ENCODE measurements at regions of chr12 and their contacts with region 1.

Region 1: DNA sequence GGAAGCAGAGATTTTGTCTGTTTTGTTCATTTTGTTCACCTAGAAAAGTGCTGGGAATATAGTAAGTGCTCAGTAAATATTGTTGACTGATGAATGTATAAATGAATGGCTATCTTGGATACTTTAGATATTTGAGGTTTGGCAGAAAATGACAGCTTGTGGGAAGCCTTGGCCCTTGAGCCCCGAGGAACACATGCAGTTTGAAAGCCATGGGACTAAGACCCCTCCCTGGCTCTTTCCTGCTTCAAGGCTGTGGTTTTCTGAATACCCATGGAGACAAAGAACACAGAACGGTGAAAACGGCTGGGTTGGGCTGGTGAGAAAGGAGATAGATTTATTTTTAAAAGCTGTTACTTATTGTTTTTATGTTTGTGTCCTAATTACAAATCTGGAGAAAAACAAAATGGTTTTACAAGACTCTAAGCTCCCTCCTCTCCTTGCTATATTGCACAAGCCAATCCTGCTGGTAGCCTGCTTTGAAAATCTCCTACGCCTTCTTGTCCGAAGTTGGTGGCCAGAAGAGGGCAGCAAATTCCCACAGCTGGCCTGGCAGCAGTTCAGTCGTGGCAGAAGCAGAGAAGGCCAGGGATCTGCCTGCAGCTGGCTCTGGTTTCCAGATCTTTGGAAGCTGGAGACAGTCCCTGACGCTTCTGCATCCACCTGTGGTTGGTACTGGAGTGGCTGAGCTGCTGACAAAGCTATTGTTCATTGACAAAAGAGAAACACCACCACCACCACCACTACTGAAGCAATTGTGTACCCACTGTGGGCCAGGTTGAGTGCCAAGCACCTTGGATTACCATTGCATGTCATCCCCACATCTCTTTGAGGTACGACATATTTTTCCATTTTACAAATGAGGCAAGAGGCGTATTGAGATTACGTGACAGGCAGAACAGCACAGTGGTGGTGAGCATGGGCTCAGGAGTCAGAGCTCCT is 5.2 kb upstream of the KRT85 start:
- DNase-seq: peak; percentile 78 to 86
- H3K4me3 ChIP-seq: no peak overlapping the region
- H3K4me3 Mint-ChIP-seq: no peak overlapping the region
- H3K27ac Mint-ChIP-seq: no peak overlapping the region
- H3K4me1 ChIP-seq: no peaks in the 10 kb centered on the region
- H3K4me1 Mint-ChIP-seq: peaks cover 8% of the 10 kb centered on the region
- H3K27me3 ChIP-seq: no peaks in the 10 kb centered on the region
- H3K27me3 Mint-ChIP-seq: peaks cover 3% of the 10 kb centered on the region
- CTCF ChIP-seq: peak; percentile 76 to 91

Region 2: GRCh38 chr12:51636581-51636980 is 735.9 kb before region 1 on chr12:
- CTCF ChIA-PET with region 1: no interaction called
- POLR2A ChIA-PET with region 1: no interaction called
- intact Hi-C with region 1: no loop called
- DNase-seq: no peak
- H3K4me3 ChIP-seq: no peak overlapping the region
- H3K4me3 Mint-ChIP-seq: no peak overlapping the region
- H3K27ac Mint-ChIP-seq: no peak overlapping the region
- H3K4me1 ChIP-seq: no peaks in the 10 kb centered on the region
- H3K4me1 Mint-ChIP-seq: no peaks in the 10 kb centered on the region
- H3K27me3 ChIP-seq: no peaks in the 10 kb centered on the region
- H3K27me3 Mint-ChIP-seq: no peaks in the 10 kb centered on the region
- CTCF ChIP-seq: no peak

Region 3: GRCh38 chr12:52295663-52296062 is 76.8 kb before region 1 on chr12:
- CTCF ChIA-PET with region 1: no interaction called
- POLR2A ChIA-PET with region 1: no interaction called
- intact Hi-C with region 1: no loop called
- DNase-seq: no peak
- H3K4me3 ChIP-seq: no peak overlapping the region
- H3K4me3 Mint-ChIP-seq: no peak overlapping the region
- H3K27ac Mint-ChIP-seq: no peak overlapping the region
- H3K4me1 ChIP-seq: no peaks in the 10 kb centered on the region
- H3K4me1 Mint-ChIP-seq: no peaks in the 10 kb centered on the region
- H3K27me3 ChIP-seq: no peaks in the 10 kb centered on the region
- H3K27me3 Mint-ChIP-seq: peaks cover 15% of the 10 kb centered on the region
- CTCF ChIP-seq: no peak

Region 4: GRCh38 chr12:52506858-52507715 is 134.6 kb after region 1 on chr12:
- CTCF ChIA-PET with region 1: no interaction called
- POLR2A ChIA-PET with region 1: no interaction called
- intact Hi-C with region 1: loop called (anchors 1 kb)
- DNase-seq: peak in 1 of 2 experiments; percentile 40
- H3K4me3 ChIP-seq: no peak overlapping the region
- H3K4me3 Mint-ChIP-seq: no peak overlapping the region
- H3K27ac Mint-ChIP-seq: no peak overlapping the region
- H3K4me1 ChIP-seq: no peaks in the 10 kb centered on the region
- H3K4me1 Mint-ChIP-seq: no peaks in the 10 kb centered on the region
- H3K27me3 ChIP-seq: no peaks in the 10 kb centered on the region
- H3K27me3 Mint-ChIP-seq: peaks cover 17% of the 10 kb centered on the region
- CTCF ChIP-seq: peak; percentile 54 to 68

Measured in Caco-2 (cell line).